ENCODE measurements at regions of chrX and their contacts with region 1.

Region 1: DNA sequence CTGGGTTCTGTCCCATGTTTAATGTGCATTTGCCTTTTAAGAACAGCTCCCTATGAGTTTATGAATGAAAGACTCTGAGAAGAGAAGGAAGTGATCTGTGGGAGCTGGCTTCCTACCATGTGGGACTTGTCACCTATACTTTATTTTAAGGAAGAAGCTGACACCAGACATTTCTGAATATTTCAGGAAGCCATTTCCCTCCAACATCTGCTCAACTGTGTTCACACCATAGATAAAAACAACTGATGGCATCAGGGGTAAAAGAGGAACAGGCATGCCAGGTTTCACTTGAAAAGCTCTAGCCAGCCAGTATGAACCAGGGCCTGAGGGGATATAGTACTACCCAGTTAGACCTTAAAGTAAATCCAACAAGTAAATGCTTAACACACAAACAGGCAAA is 116.0 kb downstream of the COL4A6 start:
- DNase-seq: no peak
- ATAC-seq: no peak
- H3K4me3 ChIP-seq: no peak overlapping the region
- H3K27ac ChIP-seq: no peak overlapping the region
- H3K4me1 ChIP-seq: no peaks in the 10 kb centered on the region
- H3K27me3 ChIP-seq: peaks cover 0 to 46% (median 0%) of the 10 kb centered on the region in 7 donors
- CTCF ChIP-seq: no peak

Region 2: DNA sequence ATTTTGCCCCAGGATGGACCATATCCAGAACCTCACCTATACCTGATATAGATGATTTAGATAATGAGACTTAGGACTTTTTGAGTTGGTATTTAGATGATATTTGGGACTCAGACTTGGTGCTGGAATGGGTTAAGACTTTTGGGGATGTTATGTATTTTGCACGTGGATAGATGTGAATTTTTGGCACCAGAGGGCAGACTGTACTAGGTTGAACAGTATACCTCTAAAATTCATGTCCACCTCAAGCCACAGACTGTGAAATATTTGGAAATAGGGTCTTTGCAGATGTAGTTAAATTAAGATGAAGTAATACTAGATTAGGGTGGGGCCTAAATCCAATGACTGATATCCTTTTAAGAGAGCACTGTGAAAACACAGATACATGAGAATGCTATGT is 1219.3 kb before region 1 on chrX:
- intact Hi-C with region 1: loop called in 1 of 10 experiments (anchors 10 kb)
- DNase-seq: no peak
- ATAC-seq: no peak
- H3K4me3 ChIP-seq: no peak overlapping the region
- H3K27ac ChIP-seq: no peak overlapping the region
- H3K4me1 ChIP-seq: no peaks in the 10 kb centered on the region
- H3K27me3 ChIP-seq: no peaks in the 10 kb centered on the region
- CTCF ChIP-seq: peak in 1 of 9 donors; percentile 13

Measured in heart right ventricle (tissue), 16 donors.